Caco-2 (cell line): ENCODE measurements at regions of chr4 and their contacts with region 1.

Region 1: GRCh38 chr4:140359562-140360427 is 13.7 kb upstream of the SCOC start:
- DNase-seq: peak; percentile 79 to 83
- H3K4me3 ChIP-seq: no peak overlapping the region
- H3K4me3 Mint-ChIP-seq: no peak overlapping the region
- H3K27ac Mint-ChIP-seq: no peak overlapping the region
- H3K4me1 ChIP-seq: peaks cover 24% of the 10 kb centered on the region
- H3K4me1 Mint-ChIP-seq: peaks cover 13% of the 10 kb centered on the region
- H3K27me3 ChIP-seq: no peaks in the 10 kb centered on the region
- H3K27me3 Mint-ChIP-seq: no peaks in the 10 kb centered on the region
- CTCF ChIP-seq: peak; percentile 67 to 80

Region 2: GRCh38 chr4:140012688-140013486 is 346.9 kb before region 1 on chr4:
- CTCF ChIA-PET with region 1: interaction called, 4 read pairs
- POLR2A ChIA-PET with region 1: no interaction called
- intact Hi-C with region 1: loop called (anchors 1 kb)
- DNase-seq: peak; percentile 69 to 77
- H3K4me3 ChIP-seq: no peak overlapping the region
- H3K4me3 Mint-ChIP-seq: peak overlapping the region; percentile 0
- H3K27ac Mint-ChIP-seq: peak overlapping the region; percentile 23
- H3K4me1 ChIP-seq: peaks cover 18% of the 10 kb centered on the region
- H3K4me1 Mint-ChIP-seq: peaks cover 30% of the 10 kb centered on the region
- H3K27me3 ChIP-seq: no peaks in the 10 kb centered on the region
- H3K27me3 Mint-ChIP-seq: no peaks in the 10 kb centered on the region
- CTCF ChIP-seq: peak; percentile 56 to 65

Region 3: DNA sequence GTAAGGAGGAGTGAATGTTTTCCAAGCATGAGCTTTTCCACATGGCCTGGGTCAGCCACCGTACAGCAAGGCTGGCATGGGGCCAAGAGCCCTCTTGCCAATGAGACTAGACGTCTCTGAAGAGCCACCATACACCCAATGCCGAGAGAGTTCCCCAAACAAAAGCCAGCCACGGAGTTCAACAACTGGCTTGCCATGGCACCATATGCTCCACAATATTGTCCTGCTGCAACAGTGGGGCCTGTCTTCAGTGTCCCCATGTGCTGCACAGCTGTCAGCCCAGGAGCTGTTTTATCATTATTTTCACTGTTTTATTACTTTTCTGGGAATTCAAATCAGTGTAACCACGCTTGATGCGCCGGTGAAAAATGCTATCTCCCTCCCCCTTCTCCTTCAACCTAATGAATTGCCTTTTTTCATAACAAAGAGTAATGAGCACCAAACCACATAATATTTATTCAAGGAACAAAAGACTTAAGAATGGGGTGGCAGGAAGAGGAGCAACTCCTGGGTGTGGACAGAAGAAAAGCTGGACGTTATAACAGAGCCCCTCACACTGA is 224.2 kb before region 1 on chr4:
- CTCF ChIA-PET with region 1: no interaction called
- POLR2A ChIA-PET with region 1: no interaction called
- intact Hi-C with region 1: no loop called
- DNase-seq: no peak
- H3K4me3 ChIP-seq: no peak overlapping the region
- H3K4me3 Mint-ChIP-seq: no peak overlapping the region
- H3K27ac Mint-ChIP-seq: peak overlapping the region; percentile 88
- H3K4me1 ChIP-seq: peaks cover 70% of the 10 kb centered on the region
- H3K4me1 Mint-ChIP-seq: peaks cover 25% of the 10 kb centered on the region
- H3K27me3 ChIP-seq: no peaks in the 10 kb centered on the region
- H3K27me3 Mint-ChIP-seq: no peaks in the 10 kb centered on the region
- CTCF ChIP-seq: no peak

Region 4: GRCh38 chr4:140373328-140374129 is 13.7 kb after region 1 on chr4 and contains the start of gene SCOC:
- CTCF ChIA-PET with region 1: interaction called, 32 read pairs
- POLR2A ChIA-PET with region 1: interaction called, 6 read pairs
- intact Hi-C with region 1: loop called (anchors 1 kb)
- DNase-seq: peak; percentile 98 to 99
- H3K4me3 ChIP-seq: peak within 1 kb of the TSS; percentile 90
- H3K4me3 Mint-ChIP-seq: no peak within 1 kb of the TSS
- H3K27ac Mint-ChIP-seq: no peak within 1 kb of the TSS
- H3K4me1 ChIP-seq: peaks cover 19% of the 10 kb centered on the region
- H3K4me1 Mint-ChIP-seq: peaks cover 7% of the 10 kb centered on the region
- H3K27me3 ChIP-seq: no peaks in the 10 kb centered on the region
- H3K27me3 Mint-ChIP-seq: no peaks in the 10 kb centered on the region
- CTCF ChIP-seq: no peak
- total RNA-seq, gene SCOC: 36.8 and 39.6 TPM in 2 replicates

Region 5: DNA sequence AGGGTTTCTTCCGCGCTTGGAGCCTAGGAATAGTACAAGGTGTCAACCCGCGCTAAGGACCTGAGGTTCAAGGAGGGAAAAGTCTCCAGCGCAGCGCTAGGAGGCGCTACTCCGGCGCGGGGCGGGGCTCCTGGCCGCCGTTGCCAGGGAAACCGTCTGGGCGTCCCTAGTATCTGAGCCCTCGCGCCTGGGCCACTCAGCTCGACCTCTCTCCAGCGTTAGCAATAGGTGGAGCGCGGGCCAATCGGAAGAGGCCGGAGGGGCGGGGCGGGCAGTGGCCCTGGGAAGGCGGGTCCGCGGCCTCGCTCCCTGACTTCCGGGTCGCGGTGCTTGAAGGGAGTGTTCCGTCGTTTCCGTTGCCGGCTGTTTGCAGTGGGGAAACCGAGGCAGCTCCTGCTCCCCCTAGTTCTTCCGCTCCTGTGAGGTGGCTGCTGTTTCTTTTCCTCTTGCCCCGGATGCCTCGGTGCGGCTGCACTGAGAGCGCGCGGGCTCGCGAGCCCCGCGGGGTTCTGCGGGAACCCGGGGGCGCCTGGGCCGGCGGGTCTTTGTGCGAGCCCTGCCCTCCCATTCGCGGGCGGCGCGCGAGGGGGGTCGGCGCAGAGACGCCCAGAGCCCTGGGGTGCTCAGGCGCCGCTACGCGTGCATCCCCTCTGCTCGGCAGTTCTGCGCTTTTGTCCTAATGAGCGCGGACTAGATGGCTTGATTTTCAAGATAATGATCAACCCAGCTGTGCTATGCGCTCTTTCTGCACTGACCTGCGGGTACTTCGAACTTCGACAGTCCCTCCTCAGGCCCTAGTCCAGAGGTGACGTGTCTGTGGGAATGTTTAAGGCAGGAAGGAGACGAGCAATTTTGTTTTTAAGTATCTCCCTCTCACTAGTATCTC is 164.3 kb after region 1 on chr4 and contains the start of gene ELMOD2:
- CTCF ChIA-PET with region 1: interaction called, 4 read pairs
- POLR2A ChIA-PET with region 1: no interaction called
- intact Hi-C with region 1: loop called (anchors 1 kb)
- DNase-seq: peak; percentile 97 to 98
- H3K4me3 ChIP-seq: peak within 1 kb of the TSS; percentile 85
- H3K4me3 Mint-ChIP-seq: peak within 1 kb of the TSS; percentile 75
- H3K27ac Mint-ChIP-seq: peak within 1 kb of the TSS; percentile 39
- H3K4me1 ChIP-seq: peaks cover 5% of the 10 kb centered on the region; the same call in 1 of the 2 replicates
- H3K4me1 Mint-ChIP-seq: peaks cover under 1% of the 10 kb centered on the region
- H3K27me3 ChIP-seq: no peaks in the 10 kb centered on the region
- H3K27me3 Mint-ChIP-seq: no peaks in the 10 kb centered on the region
- CTCF ChIP-seq: peak; percentile 85 to 90
- total RNA-seq, gene ELMOD2: 26.2 and 28.1 TPM in 2 replicates

Region 6: GRCh38 chr4:140609548-140610425 is 250.0 kb after region 1 on chr4:
- CTCF ChIA-PET with region 1: interaction called, 5 read pairs
- POLR2A ChIA-PET with region 1: no interaction called
- intact Hi-C with region 1: loop called (anchors 1 kb)
- DNase-seq: peak in 1 of 2 experiments; percentile 47
- H3K4me3 ChIP-seq: no peak overlapping the region
- H3K4me3 Mint-ChIP-seq: no peak overlapping the region
- H3K27ac Mint-ChIP-seq: no peak overlapping the region
- H3K4me1 ChIP-seq: peaks cover 10% of the 10 kb centered on the region
- H3K4me1 Mint-ChIP-seq: no peaks in the 10 kb centered on the region
- H3K27me3 ChIP-seq: no peaks in the 10 kb centered on the region
- H3K27me3 Mint-ChIP-seq: no peaks in the 10 kb centered on the region
- CTCF ChIP-seq: peak; percentile 39 to 40